Activated CD4-positive, alpha-beta T cell treated with anti-CD3 and anti-CD28 coated beads for 36 hours (primary cell): ENCODE measurements at regions of chr1 and their contacts with region 1.

Region 1: DNA sequence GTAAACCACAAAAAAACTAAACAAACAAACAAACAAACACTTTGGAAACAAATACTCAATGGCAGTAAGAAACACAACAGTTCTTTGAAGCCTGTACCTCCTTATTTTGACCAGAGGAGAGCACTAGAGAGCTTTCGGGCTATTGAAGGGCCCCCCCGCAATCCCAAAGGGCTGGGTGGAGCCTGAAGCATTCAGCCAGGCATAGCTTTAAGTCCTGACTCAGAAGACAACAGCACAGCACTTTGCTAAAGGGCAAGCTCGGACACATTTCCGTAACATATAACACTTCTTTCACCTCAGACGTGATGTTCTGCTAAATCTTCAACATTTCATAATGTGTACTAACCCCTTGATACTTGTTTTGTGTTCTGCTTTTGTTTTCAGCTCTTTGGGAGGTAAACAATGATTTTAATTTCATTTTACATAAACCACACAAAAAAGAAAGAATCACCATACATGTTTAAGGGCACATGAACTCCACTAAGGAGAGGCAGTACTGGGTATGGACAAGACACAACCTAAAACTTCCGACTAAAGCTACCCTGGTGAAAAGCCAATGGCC is 9.7 kb upstream of the SHCBP1L start:
- DNase-seq: peak; percentile 60
- ATAC-seq: peak; percentile 92
- H3K4me3 Mint-ChIP-seq: no peak overlapping the region
- H3K27ac Mint-ChIP-seq: no peak overlapping the region
- H3K4me1 Mint-ChIP-seq: no peaks in the 10 kb centered on the region
- H3K27me3 Mint-ChIP-seq: peaks cover 9% of the 10 kb centered on the region

Region 2: GRCh38 chr1:183023601-183024316 is 61.1 kb after region 1 on chr1:
- CTCF ChIA-PET with region 1: no interaction called
- POLR2A ChIA-PET with region 1: no interaction called
- intact Hi-C with region 1: loop called (anchors 5 kb)
- DNase-seq: peak; percentile 70
- ATAC-seq: peak; percentile 74
- H3K4me3 Mint-ChIP-seq: peak overlapping the region; percentile 58
- H3K27ac Mint-ChIP-seq: no peak overlapping the region
- H3K4me1 Mint-ChIP-seq: peaks cover 10% of the 10 kb centered on the region
- H3K27me3 Mint-ChIP-seq: peaks cover 54% of the 10 kb centered on the region

Region 3: DNA sequence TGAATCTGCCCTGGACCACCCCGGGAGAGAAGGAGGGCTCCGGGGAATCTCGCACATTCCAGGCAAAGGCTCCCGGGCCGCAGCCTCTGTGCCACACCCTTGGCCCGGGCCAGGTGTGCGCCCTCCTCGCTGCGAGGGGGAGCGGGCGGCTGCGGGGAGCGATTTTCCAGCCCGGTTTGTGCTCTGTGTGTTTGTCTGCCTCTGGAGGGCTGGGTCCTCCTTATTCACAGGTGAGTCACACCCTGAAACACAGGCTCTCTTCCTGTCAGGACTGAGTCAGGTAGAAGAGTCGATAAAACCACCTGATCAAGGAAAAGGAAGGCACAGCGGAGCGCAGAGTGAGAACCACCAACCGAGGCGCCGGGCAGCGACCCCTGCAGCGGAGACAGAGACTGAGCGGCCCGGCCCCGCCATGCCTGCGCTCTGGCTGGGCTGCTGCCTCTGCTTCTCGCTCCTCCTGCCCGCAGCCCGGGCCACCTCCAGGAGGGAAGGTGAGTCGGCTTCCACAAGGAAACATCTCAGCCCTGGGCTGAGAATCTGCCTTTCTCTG is 223.4 kb after region 1 on chr1 and contains the start of gene LAMC2:
- CTCF ChIA-PET with region 1: no interaction called
- POLR2A ChIA-PET with region 1: no interaction called
- intact Hi-C with region 1: loop called in 1 of 2 experiments (anchors 5 kb)
- DNase-seq: peak; percentile 68
- ATAC-seq: peak; percentile 96
- H3K4me3 Mint-ChIP-seq: peak within 1 kb of the TSS; percentile 47
- H3K27ac Mint-ChIP-seq: peak within 1 kb of the TSS; percentile 38
- H3K4me1 Mint-ChIP-seq: peaks cover 6% of the 10 kb centered on the region
- H3K27me3 Mint-ChIP-seq: peaks cover 35% of the 10 kb centered on the region
- total RNA-seq, gene LAMC2: 0.21 to 0.91 TPM

Region 4: GRCh38 chr1:183227963-183228649 is 265.5 kb after region 1 on chr1:
- CTCF ChIA-PET with region 1: interaction called, 10 read pairs
- POLR2A ChIA-PET with region 1: no interaction called
- intact Hi-C with region 1: loop called (anchors 1 to 10 kb)
- DNase-seq: peak; percentile 66
- ATAC-seq: peak; percentile 65
- H3K4me3 Mint-ChIP-seq: no peak overlapping the region
- H3K27ac Mint-ChIP-seq: no peak overlapping the region
- H3K4me1 Mint-ChIP-seq: peaks cover 8% of the 10 kb centered on the region
- H3K27me3 Mint-ChIP-seq: no peaks in the 10 kb centered on the region

Region 5: DNA sequence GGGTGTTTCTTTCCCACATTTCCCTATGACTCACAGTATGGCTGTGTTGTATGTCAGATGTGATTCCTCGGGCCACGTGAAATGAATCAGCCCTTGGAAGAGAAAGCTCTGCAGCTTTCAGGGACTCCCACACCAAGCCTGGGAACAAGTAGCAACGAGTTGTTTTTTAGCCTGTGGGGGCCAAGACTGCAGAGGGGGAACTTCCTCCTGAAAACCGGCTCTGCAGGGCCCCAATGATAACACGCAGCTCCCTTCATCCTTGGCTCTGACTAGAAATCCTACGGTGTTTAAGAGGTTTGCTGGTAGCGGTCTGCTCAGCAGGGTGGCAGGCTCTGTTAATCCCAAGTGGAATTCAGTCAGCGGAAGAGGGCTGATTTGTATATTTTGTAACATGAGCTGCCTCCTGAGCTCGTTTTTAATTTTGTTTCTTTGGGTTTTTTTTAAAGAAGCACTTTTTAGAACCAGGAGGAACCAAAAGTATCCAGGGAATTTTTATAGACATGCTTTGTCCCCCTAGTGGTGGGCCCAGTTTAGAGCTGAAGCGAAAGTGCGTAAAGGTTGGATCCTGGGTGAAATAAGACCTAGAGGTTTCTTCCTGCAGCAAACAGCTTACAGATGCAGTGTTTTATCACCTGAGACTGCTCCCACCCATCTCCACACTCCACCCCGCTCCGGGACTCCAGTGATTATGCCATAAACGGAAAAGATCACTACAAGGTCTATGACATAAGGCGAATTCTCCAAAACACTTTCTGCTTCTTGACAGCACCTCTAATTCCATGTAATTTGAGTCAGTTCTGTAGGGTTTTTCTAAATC is 272.2 kb after region 1 on chr1:
- CTCF ChIA-PET with region 1: no interaction called
- POLR2A ChIA-PET with region 1: no interaction called
- intact Hi-C with region 1: loop called in 1 of 2 experiments (anchors 10 kb)
- DNase-seq: no peak
- ATAC-seq: no peak
- H3K4me3 Mint-ChIP-seq: no peak overlapping the region
- H3K27ac Mint-ChIP-seq: no peak overlapping the region
- H3K4me1 Mint-ChIP-seq: no peaks in the 10 kb centered on the region
- H3K27me3 Mint-ChIP-seq: peaks cover 5% of the 10 kb centered on the region